PC-3 (cell line): ENCODE measurements at regions of chr12 and their contacts with region 1.

Region 1: DNA sequence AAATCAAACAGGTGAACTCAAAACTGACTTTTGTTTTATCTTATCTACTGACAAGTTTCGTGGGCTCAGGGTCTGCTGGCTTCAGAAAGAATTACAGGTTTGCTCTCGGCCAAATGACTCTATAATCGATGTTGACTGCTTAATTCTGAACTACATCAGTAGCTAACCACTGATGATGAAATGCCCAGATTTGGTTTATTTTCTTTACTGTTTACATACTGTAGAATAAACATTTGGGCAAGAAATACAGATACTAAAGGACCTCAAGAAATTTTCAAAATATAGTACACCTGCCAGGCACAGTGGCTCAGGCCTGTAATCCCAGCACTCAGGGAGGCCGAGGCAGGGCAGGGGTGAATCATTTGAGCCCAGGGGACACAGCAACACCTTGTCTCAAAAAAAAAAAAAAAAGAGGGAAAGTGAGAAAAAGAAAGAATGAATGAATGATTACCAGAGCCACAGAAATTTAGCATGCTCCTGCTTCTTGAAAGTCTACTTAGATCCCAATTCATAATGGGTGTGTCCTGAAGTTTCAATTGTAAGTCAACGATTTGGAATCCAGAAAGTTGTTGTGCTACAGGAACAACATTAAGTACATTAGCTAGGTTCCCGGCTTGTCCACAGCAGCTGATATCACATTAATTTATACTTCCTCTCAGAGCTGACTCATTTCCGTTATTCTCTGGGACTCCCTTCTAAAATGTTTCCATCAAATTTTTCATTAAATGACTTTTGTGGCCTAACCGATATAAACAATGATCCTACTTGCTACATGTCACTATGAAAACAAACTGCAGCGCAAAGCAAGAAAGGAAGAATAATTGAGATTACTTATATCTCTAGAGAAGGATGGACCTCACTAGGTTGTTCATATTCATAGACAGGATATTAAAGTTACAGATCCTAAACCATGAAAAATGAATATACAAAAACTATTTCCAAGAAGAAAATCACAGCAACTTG is 134.3 kb downstream of the MED13L start:
- DNase-seq: peak; percentile 93
- ATAC-seq: peak; percentile 89
- H3K4me3 ChIP-seq: peak overlapping the region; percentile 36
- H3K27ac ChIP-seq: peak overlapping the region; percentile 71
- H3K4me1 ChIP-seq: peaks cover 37% of the 10 kb centered on the region
- H3K27me3 ChIP-seq: no peaks in the 10 kb centered on the region
- CTCF ChIP-seq: no peak

Region 2: DNA sequence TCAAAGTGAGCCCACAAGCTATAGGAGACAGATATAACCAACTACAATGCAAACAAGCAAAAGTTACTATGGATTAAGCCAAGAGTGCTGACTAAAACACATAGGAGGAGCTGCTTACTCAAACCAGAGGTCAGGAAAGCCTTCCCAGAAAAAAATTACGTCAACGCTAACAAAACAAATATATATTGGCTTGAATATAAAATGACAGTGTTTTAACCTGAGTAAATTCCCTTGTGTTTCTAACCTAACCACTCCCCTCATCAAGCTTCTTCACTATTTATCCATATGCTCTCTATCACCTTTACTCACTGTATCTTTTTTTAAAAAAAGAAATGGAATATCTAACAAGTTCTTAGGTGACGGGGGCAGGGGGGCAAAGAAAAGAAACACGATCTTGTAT is 18.4 kb after region 1 on chr12:
- CTCF ChIA-PET with region 1: interaction called, 3 read pairs
- POLR2A ChIA-PET with region 1: no interaction called
- intact Hi-C with region 1: loop called (anchors 1 kb)
- DNase-seq: peak; percentile 90
- ATAC-seq: peak; percentile 74
- H3K4me3 ChIP-seq: peak overlapping the region; percentile 11; the same call in 1 of the 2 replicates
- H3K27ac ChIP-seq: peak overlapping the region; percentile 66
- H3K4me1 ChIP-seq: peaks cover 57% of the 10 kb centered on the region
- H3K27me3 ChIP-seq: no peaks in the 10 kb centered on the region
- CTCF ChIP-seq: no peak

Region 3: GRCh38 chr12:116277393-116278278 is 134.4 kb after region 1 on chr12 and contains the start of gene MED13L:
- CTCF ChIA-PET with region 1: interaction called, 10 read pairs
- POLR2A ChIA-PET with region 1: no interaction called
- intact Hi-C with region 1: loop called (anchors 1 kb)
- DNase-seq: peak; percentile 94
- ATAC-seq: peak; percentile 77
- H3K4me3 ChIP-seq: peak within 1 kb of the TSS; percentile 95
- H3K27ac ChIP-seq: peak within 1 kb of the TSS; percentile 65
- H3K4me1 ChIP-seq: peaks cover 41% of the 10 kb centered on the region
- H3K27me3 ChIP-seq: no peaks in the 10 kb centered on the region
- CTCF ChIP-seq: 0 out of 2 replicates have a peak, but pooled peaks have one; percentile 13
- total RNA-seq, gene MED13L: 61.2 and 71.6 TPM in 2 replicates

Region 4: GRCh38 chr12:116306506-116306905 is 163.3 kb after region 1 on chr12:
- CTCF ChIA-PET with region 1: no interaction called
- POLR2A ChIA-PET with region 1: no interaction called
- intact Hi-C with region 1: no loop called
- DNase-seq: no peak
- ATAC-seq: no peak
- H3K4me3 ChIP-seq: no peak overlapping the region
- H3K27ac ChIP-seq: no peak overlapping the region
- H3K4me1 ChIP-seq: no peaks in the 10 kb centered on the region
- H3K27me3 ChIP-seq: no peaks in the 10 kb centered on the region
- CTCF ChIP-seq: no peak

Region 5: GRCh38 chr12:116382686-116383531 is 239.7 kb after region 1 on chr12:
- CTCF ChIA-PET with region 1: no interaction called
- POLR2A ChIA-PET with region 1: interaction called, 11 read pairs
- intact Hi-C with region 1: no loop called
- DNase-seq: peak; percentile 94
- ATAC-seq: peak; percentile 69
- H3K4me3 ChIP-seq: no peak overlapping the region; the same call in 1 of the 2 replicates
- H3K27ac ChIP-seq: peak overlapping the region; percentile 88
- H3K4me1 ChIP-seq: peaks cover 39% of the 10 kb centered on the region
- H3K27me3 ChIP-seq: no peaks in the 10 kb centered on the region
- CTCF ChIP-seq: no peak

Region 6: DNA sequence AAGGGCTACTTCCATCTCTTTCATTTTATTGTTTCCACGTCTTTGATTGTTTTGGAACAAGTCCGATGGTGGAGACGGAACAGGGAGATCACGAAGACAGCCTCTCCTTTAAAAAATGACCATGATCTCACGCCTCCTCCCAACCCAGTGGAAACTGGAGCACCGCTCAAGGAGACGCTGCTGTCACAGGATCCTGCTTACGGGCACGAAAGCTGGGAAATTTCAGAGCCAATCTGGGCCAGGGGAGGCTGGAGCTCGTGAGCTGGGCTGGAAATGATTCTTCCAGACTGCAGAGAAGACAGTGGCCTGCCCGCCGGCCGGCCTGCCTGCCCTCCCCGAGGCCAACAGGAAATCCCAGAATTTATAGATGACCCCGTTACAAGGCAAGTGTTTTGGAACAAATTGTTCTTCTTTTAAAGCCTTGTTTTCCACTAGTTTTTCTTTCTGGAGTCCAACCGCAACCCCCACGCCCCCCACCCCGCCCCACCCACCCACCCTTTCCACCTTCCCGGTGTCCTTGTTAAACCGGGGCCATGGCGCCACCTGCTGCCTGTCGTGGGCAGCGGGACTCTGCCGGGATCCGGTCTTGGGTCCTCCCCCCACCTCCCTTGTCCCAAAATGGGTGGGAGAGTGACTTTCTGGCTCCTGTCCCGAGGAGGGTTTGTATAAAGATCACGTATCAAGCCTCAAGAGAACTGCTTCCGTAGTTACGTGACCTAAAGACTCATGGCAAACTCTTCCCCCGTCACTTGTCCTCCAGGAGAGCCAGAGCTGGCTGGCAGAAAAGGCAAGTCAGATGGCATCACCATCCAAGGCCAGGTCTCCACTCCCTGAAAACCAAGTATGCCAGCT is 456.3 kb after region 1 on chr12:
- CTCF ChIA-PET with region 1: no interaction called
- POLR2A ChIA-PET with region 1: no interaction called
- intact Hi-C with region 1: loop called (anchors 1 kb)
- DNase-seq: peak; percentile 91
- ATAC-seq: peak; percentile 84
- H3K4me3 ChIP-seq: peak overlapping the region; percentile 59
- H3K27ac ChIP-seq: peak overlapping the region; percentile 87
- H3K4me1 ChIP-seq: peaks cover 29% of the 10 kb centered on the region
- H3K27me3 ChIP-seq: no peaks in the 10 kb centered on the region
- CTCF ChIP-seq: peak; percentile 65